ENCODE measurements at regions of chr1 and their contacts with region 1.

Region 1: DNA sequence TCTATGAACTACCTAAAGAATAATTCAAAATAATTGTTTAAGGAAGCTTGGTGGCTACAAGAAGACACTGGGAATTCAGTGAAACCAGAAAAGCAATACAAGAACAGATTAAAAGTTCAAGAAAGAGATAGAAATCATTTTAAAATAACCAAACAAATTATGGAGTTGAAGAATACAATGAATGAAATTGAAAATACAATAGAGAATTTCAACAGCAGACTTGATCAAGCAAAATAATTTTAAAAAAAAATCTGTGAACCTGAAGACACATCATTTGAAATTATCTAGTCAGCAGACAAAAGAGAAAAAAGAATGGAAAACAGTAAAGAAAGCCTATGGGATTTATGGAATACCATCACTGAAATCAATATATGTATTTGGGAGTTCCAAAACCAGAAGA is 31.2 kb upstream of the WNT2B start:
- DNase-seq: no peak
- H3K4me3 ChIP-seq: no peak overlapping the region
- H3K27me3 ChIP-seq: no peaks in the 10 kb centered on the region
- CTCF ChIP-seq: no peak

Region 2: GRCh38 chr1:112444269-112444668 is 33.3 kb before region 1 on chr1:
- CTCF ChIA-PET with region 1: no interaction called
- POLR2A ChIA-PET with region 1: no interaction called
- DNase-seq: peak; percentile 19
- H3K4me3 ChIP-seq: no peak overlapping the region
- H3K27me3 ChIP-seq: no peaks in the 10 kb centered on the region
- CTCF ChIP-seq: no peak

Region 3: GRCh38 chr1:112492076-112492475 is 14.5 kb after region 1 on chr1:
- CTCF ChIA-PET with region 1: no interaction called
- POLR2A ChIA-PET with region 1: no interaction called
- DNase-seq: no peak
- H3K4me3 ChIP-seq: no peak overlapping the region
- H3K27me3 ChIP-seq: no peaks in the 10 kb centered on the region
- CTCF ChIP-seq: no peak

Region 4: DNA sequence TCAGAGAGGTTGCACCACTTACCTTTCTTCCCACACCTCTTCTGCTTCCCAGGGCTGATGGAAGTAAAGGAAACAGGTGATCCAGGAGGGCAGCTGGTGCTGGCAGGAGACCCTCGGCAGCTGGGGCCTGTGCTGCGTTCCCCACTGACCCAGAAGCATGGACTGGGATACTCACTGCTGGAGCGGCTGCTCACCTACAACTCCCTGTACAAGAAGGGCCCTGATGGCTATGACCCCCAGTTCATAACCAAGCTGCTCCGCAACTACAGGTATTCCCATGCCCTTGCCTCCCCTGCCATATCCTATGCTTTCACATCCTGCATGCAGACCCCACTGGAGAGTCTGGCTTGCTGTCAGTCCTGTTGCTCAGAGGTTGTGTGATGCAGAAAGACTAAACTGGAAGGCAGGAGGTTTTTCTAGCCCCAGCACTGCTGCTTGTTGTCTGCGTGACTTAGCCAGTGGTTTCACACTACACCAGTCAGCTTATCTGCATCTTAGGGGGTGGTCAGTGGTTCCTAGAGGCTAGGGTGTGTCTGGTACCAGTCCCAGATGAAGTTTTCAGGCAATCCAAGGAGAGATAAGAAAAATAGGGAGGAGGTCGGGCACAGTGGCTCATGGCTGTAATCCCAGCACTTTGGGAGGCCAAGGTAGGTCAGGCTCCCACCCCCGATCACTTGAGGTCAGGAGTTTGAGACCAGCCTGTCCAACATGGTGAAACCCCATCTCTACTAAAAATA is 219.2 kb after region 1 on chr1:
- CTCF ChIA-PET with region 1: no interaction called
- POLR2A ChIA-PET with region 1: interaction called, 10 read pairs
- DNase-seq: no peak
- H3K4me3 ChIP-seq: no peak overlapping the region
- H3K27me3 ChIP-seq: no peaks in the 10 kb centered on the region
- CTCF ChIP-seq: no peak